ENCODE measurements at regions of chr12 and their contacts with region 1.

Region 1: GRCh38 chr12:41277116-41277945 is 89.2 kb downstream of the PDZRN4 start:
- DNase-seq: peak; percentile 52
- ATAC-seq: peak; percentile 62
- H3K4me3 ChIP-seq: no peak overlapping the region
- H3K27ac ChIP-seq: no peak overlapping the region
- H3K4me1 ChIP-seq: no peaks in the 10 kb centered on the region
- H3K27me3 ChIP-seq: no peaks in the 10 kb centered on the region
- CTCF ChIP-seq: peak; percentile 73
- POLR2A ChIP-seq: no peak
- RAD21 ChIP-seq: peak; percentile 77

Region 2: GRCh38 chr12:41663598-41664258 is 386.4 kb after region 1 on chr12:
- CTCF ChIA-PET with region 1: interaction called, 3 read pairs
- POLR2A ChIA-PET with region 1: no interaction called
- dilution Hi-C with region 1: no loop called
- in situ Hi-C with region 1: no loop called
- intact Hi-C with region 1: loop called (anchors 5 kb)
- DNase-seq: peak; percentile 20
- ATAC-seq: peak; percentile 40
- H3K4me3 ChIP-seq: no peak overlapping the region
- H3K27ac ChIP-seq: no peak overlapping the region
- H3K4me1 ChIP-seq: no peaks in the 10 kb centered on the region
- H3K27me3 ChIP-seq: no peaks in the 10 kb centered on the region
- CTCF ChIP-seq: peak; percentile 33
- POLR2A ChIP-seq: no peak
- RAD21 ChIP-seq: peak; percentile 39

Region 3: DNA sequence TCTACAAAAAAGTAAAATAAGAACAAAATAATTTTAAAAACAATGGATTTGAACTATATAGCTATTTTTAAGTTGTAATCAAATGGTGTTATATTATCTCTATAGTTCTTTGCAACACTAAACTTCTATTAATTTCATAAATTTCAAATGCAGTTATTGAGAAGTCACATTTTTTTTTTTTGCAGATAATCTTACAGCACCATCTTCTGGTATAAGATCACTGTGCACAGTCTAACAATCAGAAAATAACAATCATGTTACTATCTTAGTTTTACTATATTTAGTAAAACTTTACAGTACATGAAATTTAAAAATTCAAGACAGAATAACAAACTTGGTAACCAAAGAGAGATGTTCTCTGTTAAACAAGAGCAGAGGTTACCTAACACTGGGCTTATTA is 826.8 kb after region 1 on chr12:
- CTCF ChIA-PET with region 1: no interaction called
- POLR2A ChIA-PET with region 1: no interaction called
- dilution Hi-C with region 1: no loop called
- in situ Hi-C with region 1: no loop called
- intact Hi-C with region 1: loop called (anchors 1 kb)
- DNase-seq: no peak
- ATAC-seq: no peak
- H3K4me3 ChIP-seq: no peak overlapping the region
- H3K27ac ChIP-seq: no peak overlapping the region
- H3K4me1 ChIP-seq: no peaks in the 10 kb centered on the region
- H3K27me3 ChIP-seq: no peaks in the 10 kb centered on the region
- CTCF ChIP-seq: peak; percentile 35; the same call in 1 of the 2 replicates
- POLR2A ChIP-seq: no peak
- RAD21 ChIP-seq: 0 out of 2 replicates have a peak, but pooled peaks have one; percentile 11

Region 4: GRCh38 chr12:42372154-42372791 is 1094.9 kb after region 1 on chr12:
- CTCF ChIA-PET with region 1: no interaction called
- POLR2A ChIA-PET with region 1: no interaction called
- dilution Hi-C with region 1: no loop called
- in situ Hi-C with region 1: no loop called
- intact Hi-C with region 1: loop called (anchors 5 kb)
- DNase-seq: peak; percentile 46
- ATAC-seq: peak; percentile 77
- H3K4me3 ChIP-seq: no peak overlapping the region
- H3K27ac ChIP-seq: no peak overlapping the region
- H3K4me1 ChIP-seq: no peaks in the 10 kb centered on the region
- H3K27me3 ChIP-seq: no peaks in the 10 kb centered on the region
- CTCF ChIP-seq: peak; percentile 73
- POLR2A ChIP-seq: no peak
- RAD21 ChIP-seq: peak; percentile 84

Measured in IMR-90 (cell line).